ENCODE measurements at regions of chr6 and their contacts with region 1.

Region 1: DNA sequence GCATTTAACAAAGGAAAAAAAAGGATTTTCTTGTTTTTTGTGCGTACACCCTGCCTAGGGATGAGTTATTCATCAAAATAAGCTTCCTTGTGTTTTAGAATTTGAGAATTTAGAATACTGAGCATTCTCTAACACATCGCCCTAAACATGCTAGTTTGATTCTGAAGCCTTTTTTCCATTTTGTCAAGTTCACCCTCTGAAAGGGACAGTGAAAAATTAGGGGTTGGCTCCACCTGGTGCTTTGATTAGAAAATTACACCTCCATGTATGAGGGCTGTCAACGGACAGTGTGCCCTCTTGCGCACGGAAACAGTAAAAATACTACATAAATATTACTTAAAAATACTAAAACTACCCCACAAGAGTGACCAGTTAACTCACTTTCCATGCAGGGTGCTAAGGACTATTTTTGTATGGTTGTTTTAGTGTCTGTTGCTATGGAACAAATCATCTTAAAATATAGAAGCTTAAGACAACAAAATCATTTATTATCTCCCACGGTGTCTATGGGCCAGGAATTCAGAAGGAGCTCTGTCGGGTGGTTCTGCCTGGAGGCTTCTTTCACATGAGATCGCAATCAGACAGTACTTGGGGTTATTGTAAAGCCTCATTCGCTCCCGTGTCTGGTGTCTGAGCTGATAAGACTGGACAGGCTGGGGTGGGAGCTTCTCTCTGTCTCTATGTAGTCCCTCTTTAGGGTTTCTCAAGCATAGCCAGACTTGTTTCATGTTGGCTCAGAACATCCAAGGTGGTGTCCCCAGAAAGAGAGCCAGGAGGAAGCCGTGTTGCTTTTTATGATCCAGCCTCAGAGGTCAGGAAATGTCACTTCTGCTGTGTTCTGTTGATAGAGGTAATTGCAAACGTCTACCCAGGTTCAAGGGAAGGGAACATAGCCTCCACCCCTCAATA is 41.1 kb upstream of the TMEM170B start:
- DNase-seq: peak; percentile 10 to 62
- H3K4me3 ChIP-seq: no peak overlapping the region
- H3K27ac ChIP-seq: no peak overlapping the region
- H3K4me1 ChIP-seq: peaks cover 0 to 4% (median 2%) of the 10 kb centered on the region in 4 experiments; a peak in 2 of 7 replicates
- H3K27me3 ChIP-seq: no peaks in the 10 kb centered on the region
- CTCF ChIP-seq: peak; percentile 18 to 98 (median 71)
- EP300 ChIP-seq: no peak
- POLR2A ChIP-seq: no peak
- RAD21 ChIP-seq: peak; percentile 98

Region 2: DNA sequence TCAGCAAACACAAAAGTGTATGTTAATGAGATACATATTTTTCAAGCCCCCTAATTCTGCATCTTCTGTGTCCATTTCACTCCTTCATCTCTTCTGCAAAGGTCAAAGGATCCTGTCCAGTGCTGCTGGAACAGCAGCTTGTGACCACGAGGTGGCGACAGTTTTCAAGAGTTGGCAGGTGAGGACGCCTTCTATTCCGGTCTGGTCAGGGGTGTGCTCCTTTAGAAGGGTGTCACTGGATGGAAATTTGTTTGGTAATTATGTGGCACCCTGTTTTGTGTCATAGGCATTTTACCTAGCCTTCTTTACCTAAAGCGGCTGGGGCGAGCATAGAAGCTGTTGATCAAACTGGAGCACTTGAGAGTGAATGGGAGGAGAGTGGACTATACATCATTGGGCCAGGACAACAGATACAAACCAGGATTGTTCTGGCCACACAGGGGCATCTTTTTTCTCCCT is 352.0 kb before region 1 on chr6:
- CTCF ChIA-PET with region 1: interaction called, 82 read pairs
- POLR2A ChIA-PET with region 1: interaction called, 3 read pairs
- DNase-seq: peak; percentile 38 to 82
- H3K4me3 ChIP-seq: no peak overlapping the region
- H3K27ac ChIP-seq: no peak overlapping the region
- H3K4me1 ChIP-seq: peaks cover 0 to 7% (median 4%) of the 10 kb centered on the region in 4 experiments; a peak in 3 of 7 replicates
- H3K27me3 ChIP-seq: no peaks in the 10 kb centered on the region
- CTCF ChIP-seq: peak; percentile 88 to 94 (median 92)
- EP300 ChIP-seq: no peak
- POLR2A ChIP-seq: no peak
- RAD21 ChIP-seq: peak; percentile 96 to 97

Region 3: GRCh38 chr6:11172501-11173332 is 323.7 kb before region 1 on chr6:
- CTCF ChIA-PET with region 1: interaction called, 30 read pairs
- POLR2A ChIA-PET with region 1: no interaction called
- DNase-seq: peak; percentile 49 to 95
- H3K4me3 ChIP-seq: 0 out of 8 replicates have a peak overlapping the region, but pooled peaks of 1 of the 4 experiments have one; percentile 19
- H3K27ac ChIP-seq: no peak overlapping the region
- H3K4me1 ChIP-seq: peaks cover 0 to 7% (median 0%) of the 10 kb centered on the region in 4 experiments; a peak in 2 of 7 replicates
- H3K27me3 ChIP-seq: no peaks in the 10 kb centered on the region
- CTCF ChIP-seq: peak; percentile 84 to 92 (median 88)
- EP300 ChIP-seq: no peak
- POLR2A ChIP-seq: no peak
- RAD21 ChIP-seq: peak; percentile 76 to 86

Region 4: GRCh38 chr6:11277275-11278206 is 218.9 kb before region 1 on chr6:
- CTCF ChIA-PET with region 1: interaction called, 10 read pairs
- POLR2A ChIA-PET with region 1: no interaction called
- DNase-seq: peak in 1 of 2 experiments; percentile 21
- H3K4me3 ChIP-seq: no peak overlapping the region
- H3K27ac ChIP-seq: no peak overlapping the region
- H3K4me1 ChIP-seq: peaks cover 4 to 9% (median 8%) of the 10 kb centered on the region in 4 experiments; a peak in 6 of 7 replicates
- H3K27me3 ChIP-seq: no peaks in the 10 kb centered on the region; a peak in 1 of 7 replicates
- CTCF ChIP-seq: no peak
- EP300 ChIP-seq: no peak
- POLR2A ChIP-seq: no peak
- RAD21 ChIP-seq: no peak

Region 5: GRCh38 chr6:11509471-11509870 is 13.1 kb after region 1 on chr6:
- CTCF ChIA-PET with region 1: interaction called, 44 read pairs
- POLR2A ChIA-PET with region 1: no interaction called
- DNase-seq: no peak
- H3K4me3 ChIP-seq: no peak overlapping the region
- H3K27ac ChIP-seq: no peak overlapping the region
- H3K4me1 ChIP-seq: no peaks in the 10 kb centered on the region
- H3K27me3 ChIP-seq: no peaks in the 10 kb centered on the region
- CTCF ChIP-seq: no peak
- EP300 ChIP-seq: no peak
- POLR2A ChIP-seq: no peak
- RAD21 ChIP-seq: no peak

Region 6: DNA sequence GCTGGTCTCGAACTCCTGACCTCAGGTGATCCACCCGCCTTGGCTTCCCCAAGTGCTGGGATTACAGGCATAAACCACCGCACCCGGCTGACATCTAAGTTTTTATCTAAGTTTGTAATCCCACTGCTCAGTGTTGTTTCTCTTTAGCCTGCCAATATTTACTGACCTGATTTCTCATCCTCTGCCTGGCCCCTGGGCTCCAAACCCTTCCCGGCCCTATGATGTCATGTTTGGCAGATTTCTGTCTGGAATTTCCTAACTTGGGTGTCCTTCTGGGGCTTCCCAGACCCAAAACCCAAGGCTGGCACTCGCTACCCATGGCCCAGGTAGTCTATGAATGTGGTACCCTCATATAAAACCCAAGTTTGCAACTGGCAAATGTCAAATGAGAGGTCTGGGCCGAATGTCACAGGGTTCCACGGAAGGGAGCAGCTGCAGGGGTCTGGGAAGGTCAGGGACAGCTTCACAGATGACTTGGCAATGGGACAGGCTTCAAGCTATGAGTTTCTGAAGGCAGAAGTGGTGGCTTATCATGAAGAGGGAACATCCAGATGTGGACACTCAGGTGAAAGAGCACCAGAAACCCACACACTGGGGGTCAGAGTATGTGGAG is 96.0 kb after region 1 on chr6:
- CTCF ChIA-PET with region 1: no interaction called
- POLR2A ChIA-PET with region 1: no interaction called
- DNase-seq: no peak
- H3K4me3 ChIP-seq: no peak overlapping the region
- H3K27ac ChIP-seq: no peak overlapping the region
- H3K4me1 ChIP-seq: peaks cover 0 to 2% (median 0%) of the 10 kb centered on the region in 4 experiments; a peak in 1 of 7 replicates
- H3K27me3 ChIP-seq: no peaks in the 10 kb centered on the region
- CTCF ChIP-seq: no peak
- EP300 ChIP-seq: no peak
- POLR2A ChIP-seq: no peak
- RAD21 ChIP-seq: no peak

Region 7: GRCh38 chr6:11675601-11676000 is 179.2 kb after region 1 on chr6:
- CTCF ChIA-PET with region 1: no interaction called
- POLR2A ChIA-PET with region 1: no interaction called
- DNase-seq: no peak
- H3K4me3 ChIP-seq: no peak overlapping the region
- H3K27ac ChIP-seq: no peak overlapping the region
- H3K4me1 ChIP-seq: no peaks in the 10 kb centered on the region
- H3K27me3 ChIP-seq: no peaks in the 10 kb centered on the region
- CTCF ChIP-seq: no peak
- EP300 ChIP-seq: no peak
- POLR2A ChIP-seq: no peak
- RAD21 ChIP-seq: no peak

Measured in H1 (cell line).